Caco-2 (cell line): ENCODE measurements at regions of chr10 and their contacts with region 1.

Region 1: GRCh38 chr10:77710759-77711682 is 73.4 kb upstream of the KCNMA1 start:
- DNase-seq: peak; percentile 65 to 87
- H3K4me3 ChIP-seq: peak overlapping the region; percentile 5; the same call in 1 of the 2 replicates
- H3K4me3 Mint-ChIP-seq: peak overlapping the region; percentile 39
- H3K27ac Mint-ChIP-seq: no peak overlapping the region
- H3K4me1 ChIP-seq: peaks cover 10% of the 10 kb centered on the region; the same call in 1 of the 2 replicates
- H3K4me1 Mint-ChIP-seq: no peaks in the 10 kb centered on the region
- H3K27me3 ChIP-seq: no peaks in the 10 kb centered on the region
- H3K27me3 Mint-ChIP-seq: no peaks in the 10 kb centered on the region
- CTCF ChIP-seq: peak; percentile 97 to 98

Region 2: DNA sequence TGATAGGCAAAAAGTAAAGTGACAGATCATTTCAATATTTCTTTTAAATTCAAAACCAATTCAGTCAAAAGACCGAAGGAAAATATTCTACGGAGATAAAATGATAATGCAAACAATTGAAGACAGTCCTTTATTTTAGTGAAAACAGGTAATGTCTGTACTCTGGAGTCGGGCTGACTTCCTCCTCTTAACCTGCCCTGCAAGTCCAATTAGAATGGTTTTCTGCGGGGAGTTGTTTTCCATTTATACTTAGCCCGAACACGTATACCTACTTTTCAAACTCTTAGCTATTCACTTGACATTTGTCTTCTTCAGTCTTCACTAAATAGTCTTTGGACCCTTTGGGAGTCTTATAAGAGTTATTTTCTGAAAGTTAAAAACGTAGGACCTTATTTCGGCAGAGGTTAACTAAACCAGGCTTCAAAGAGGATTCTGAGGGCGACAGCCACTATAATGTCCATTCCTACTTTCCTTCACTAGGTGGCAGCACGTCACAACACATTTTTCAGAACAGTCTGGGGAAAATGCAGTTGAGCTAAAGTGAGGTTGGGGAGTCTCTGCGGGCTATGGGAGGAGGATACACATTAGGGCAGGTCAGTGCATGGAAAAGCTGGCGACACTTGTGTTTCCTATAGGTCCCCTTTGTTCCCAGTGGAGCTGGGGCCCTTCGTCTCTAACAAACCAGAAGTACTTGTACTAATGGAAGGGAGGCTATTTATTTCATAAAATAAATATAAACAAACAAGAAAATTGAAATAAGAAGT is 545.4 kb before region 1 on chr10:
- CTCF ChIA-PET with region 1: interaction called, 29 read pairs
- POLR2A ChIA-PET with region 1: no interaction called
- intact Hi-C with region 1: loop called (anchors 1 kb)
- DNase-seq: peak; percentile 65 to 76
- H3K4me3 ChIP-seq: no peak overlapping the region
- H3K4me3 Mint-ChIP-seq: peak overlapping the region; percentile 51
- H3K27ac Mint-ChIP-seq: no peak overlapping the region
- H3K4me1 ChIP-seq: peaks cover 3% of the 10 kb centered on the region; the same call in 1 of the 2 replicates
- H3K4me1 Mint-ChIP-seq: peaks cover 26% of the 10 kb centered on the region
- H3K27me3 ChIP-seq: no peaks in the 10 kb centered on the region
- H3K27me3 Mint-ChIP-seq: no peaks in the 10 kb centered on the region
- CTCF ChIP-seq: peak; percentile 74 to 76

Region 3: DNA sequence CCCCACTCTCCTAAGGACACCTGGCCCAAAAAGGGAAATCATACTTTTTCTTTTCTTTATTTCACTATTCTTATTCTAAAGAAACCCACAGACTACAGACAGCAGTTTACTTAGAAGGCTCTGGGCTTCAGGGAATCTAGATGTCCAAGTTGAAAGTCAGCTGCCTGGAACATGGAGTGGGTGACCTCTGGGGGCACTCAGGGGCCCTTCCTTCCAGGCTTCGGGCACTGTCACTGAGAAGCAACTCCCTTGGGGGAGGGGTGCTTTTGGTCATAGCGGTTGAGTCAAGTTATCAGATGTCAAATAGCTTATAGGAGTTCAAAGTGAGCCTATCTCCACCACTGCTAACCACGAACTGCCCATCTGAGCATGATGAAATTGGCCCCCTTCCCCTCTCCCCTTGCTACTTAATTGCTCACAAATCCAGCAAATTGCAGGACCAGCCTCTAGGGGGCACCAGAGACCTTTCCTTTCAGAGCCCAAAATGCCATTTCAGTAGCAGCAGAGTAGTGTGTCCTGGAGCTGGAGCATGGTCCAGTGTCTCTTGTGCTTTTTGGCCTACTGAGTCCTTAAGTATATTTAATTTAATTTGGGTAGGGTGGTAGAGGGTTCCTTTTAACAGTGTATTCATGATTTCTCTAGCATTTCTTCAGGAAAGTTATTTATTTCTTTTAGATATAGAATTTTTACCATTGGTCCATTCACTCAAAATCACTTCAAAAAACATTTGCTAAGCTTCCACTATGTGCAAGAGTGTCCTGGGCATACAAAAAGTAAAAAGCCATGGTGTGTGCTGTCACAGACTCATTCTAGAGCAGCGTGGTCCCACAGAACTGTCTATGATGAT is 537.2 kb before region 1 on chr10:
- CTCF ChIA-PET with region 1: interaction called, 25 read pairs
- POLR2A ChIA-PET with region 1: no interaction called
- intact Hi-C with region 1: no loop called
- DNase-seq: peak; percentile 75 to 87
- H3K4me3 ChIP-seq: no peak overlapping the region
- H3K4me3 Mint-ChIP-seq: no peak overlapping the region
- H3K27ac Mint-ChIP-seq: no peak overlapping the region
- H3K4me1 ChIP-seq: no peaks in the 10 kb centered on the region
- H3K4me1 Mint-ChIP-seq: no peaks in the 10 kb centered on the region
- H3K27me3 ChIP-seq: no peaks in the 10 kb centered on the region
- H3K27me3 Mint-ChIP-seq: no peaks in the 10 kb centered on the region
- CTCF ChIP-seq: peak; percentile 84 to 94

Region 4: DNA sequence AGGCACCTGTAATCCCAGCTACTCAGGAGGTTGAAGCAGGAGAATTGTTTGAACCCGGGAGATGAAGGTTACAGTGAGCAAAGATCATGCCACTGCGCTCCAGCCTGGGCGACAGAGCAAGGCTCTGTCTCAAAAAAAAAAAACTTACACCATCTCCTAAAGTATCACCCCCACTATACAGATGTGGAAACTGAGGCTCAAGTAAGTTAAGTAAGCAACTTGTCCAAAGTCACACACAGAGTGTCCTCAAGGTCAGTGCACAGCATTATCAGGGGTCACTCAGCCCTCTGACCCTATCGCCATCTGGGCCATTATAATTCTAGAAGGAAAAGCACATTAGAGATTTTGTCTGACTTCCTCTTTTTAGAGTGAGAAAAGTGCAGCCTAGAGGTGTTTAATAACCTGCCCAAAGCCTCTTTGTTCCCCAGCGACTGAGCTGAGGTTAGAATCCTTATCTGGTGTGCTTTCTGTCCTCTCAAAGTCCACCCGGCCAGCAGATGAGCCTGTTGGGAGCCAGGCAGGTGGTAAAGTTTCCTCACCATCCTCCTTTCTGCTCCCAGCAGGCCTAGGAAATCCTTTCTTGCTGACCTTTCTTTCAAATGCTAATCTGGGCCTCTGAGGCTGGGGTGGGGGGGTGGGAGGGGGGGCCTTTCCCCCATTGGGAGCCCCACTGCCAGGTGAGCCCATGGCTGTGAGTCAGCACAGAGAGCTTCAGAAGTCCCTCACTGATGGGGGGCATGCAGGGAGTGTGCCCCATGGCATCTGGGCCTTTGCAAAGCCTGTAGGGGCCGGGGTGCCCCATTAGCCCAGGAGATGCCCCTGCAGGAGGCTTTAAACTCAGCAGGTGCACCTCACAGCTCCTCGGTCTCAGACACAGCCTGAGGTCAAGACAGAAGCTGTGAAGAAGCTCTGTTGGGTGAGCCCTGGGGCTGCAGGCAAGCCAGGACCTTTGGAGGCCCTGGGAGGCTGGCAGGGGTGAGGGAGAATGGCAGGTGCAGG is 61.4 kb before region 1 on chr10:
- CTCF ChIA-PET with region 1: interaction called, 5 read pairs
- POLR2A ChIA-PET with region 1: no interaction called
- intact Hi-C with region 1: loop called (anchors 2 kb)
- DNase-seq: peak; percentile 54 to 55
- H3K4me3 ChIP-seq: no peak overlapping the region
- H3K4me3 Mint-ChIP-seq: no peak overlapping the region
- H3K27ac Mint-ChIP-seq: no peak overlapping the region
- H3K4me1 ChIP-seq: peaks cover 3% of the 10 kb centered on the region; the same call in 1 of the 2 replicates
- H3K4me1 Mint-ChIP-seq: peaks cover 21% of the 10 kb centered on the region
- H3K27me3 ChIP-seq: no peaks in the 10 kb centered on the region
- H3K27me3 Mint-ChIP-seq: no peaks in the 10 kb centered on the region
- CTCF ChIP-seq: no peak

Region 5: DNA sequence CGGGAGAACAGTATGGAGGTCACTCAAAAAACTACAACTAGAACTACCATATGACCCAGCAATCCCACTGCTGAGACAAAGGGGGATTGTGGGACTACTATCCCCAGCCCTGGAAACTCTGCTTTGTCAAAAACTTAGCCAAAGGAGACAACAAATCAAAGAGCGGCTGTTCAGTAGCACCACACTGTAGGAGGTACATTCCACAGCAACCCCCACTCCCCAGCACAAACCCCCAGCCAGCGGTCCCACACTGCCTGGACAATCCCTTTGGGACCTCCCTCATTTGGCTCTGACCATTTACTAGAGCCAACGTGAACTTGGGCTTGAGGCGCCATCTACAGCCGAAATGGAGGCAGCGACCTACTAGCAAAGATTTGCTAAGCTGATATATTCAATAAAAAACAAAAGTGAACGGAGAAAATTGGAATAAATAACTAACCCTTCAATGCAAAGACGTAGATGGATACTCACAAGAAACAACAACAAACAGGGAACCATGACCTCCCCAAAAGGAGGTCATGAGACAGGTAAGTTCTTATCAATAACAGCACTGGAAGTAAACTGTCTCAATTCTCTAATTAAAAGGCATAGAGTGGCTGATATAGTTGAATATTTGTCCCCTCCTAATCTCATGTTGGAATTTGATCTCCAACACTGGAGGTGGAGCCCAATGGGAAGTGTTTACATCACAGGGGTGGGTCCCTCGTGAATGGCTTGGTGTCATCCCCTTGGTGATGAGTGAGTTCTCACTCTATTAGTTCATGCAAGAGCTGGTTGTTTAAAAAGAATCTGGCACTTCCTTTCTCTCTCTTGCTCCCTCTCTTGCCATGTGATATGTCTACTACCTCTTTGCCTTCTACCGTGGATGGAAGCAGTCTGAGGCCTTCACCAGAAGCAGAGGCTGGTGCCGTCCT is 45.6 kb after region 1 on chr10:
- CTCF ChIA-PET with region 1: interaction called, 25 read pairs
- POLR2A ChIA-PET with region 1: no interaction called
- intact Hi-C with region 1: loop called (anchors 1 kb)
- DNase-seq: peak; percentile 69 to 71
- H3K4me3 ChIP-seq: no peak overlapping the region
- H3K4me3 Mint-ChIP-seq: no peak overlapping the region
- H3K27ac Mint-ChIP-seq: no peak overlapping the region
- H3K4me1 ChIP-seq: no peaks in the 10 kb centered on the region; the same call in 1 of the 2 replicates
- H3K4me1 Mint-ChIP-seq: peaks cover 11% of the 10 kb centered on the region
- H3K27me3 ChIP-seq: no peaks in the 10 kb centered on the region
- H3K27me3 Mint-ChIP-seq: no peaks in the 10 kb centered on the region
- CTCF ChIP-seq: peak; percentile 82 to 83